AG04449 (cell line): ENCODE measurements at regions of chr1 and their contacts with region 1.

Region 1: GRCh38 chr1:39919545-39919944 is 17.8 kb upstream of the MYCL start:
- DNase-seq: no peak
- H3K4me3 ChIP-seq: no peak overlapping the region
- CTCF ChIP-seq: peak; percentile 48

Region 2: GRCh38 chr1:39672551-39672947 is 247.0 kb before region 1 on chr1:
- CTCF ChIA-PET with region 1: no interaction called
- POLR2A ChIA-PET with region 1: no interaction called
- DNase-seq: no peak
- H3K4me3 ChIP-seq: peak overlapping the region; percentile 47
- CTCF ChIP-seq: peak; percentile 50

Region 3: DNA sequence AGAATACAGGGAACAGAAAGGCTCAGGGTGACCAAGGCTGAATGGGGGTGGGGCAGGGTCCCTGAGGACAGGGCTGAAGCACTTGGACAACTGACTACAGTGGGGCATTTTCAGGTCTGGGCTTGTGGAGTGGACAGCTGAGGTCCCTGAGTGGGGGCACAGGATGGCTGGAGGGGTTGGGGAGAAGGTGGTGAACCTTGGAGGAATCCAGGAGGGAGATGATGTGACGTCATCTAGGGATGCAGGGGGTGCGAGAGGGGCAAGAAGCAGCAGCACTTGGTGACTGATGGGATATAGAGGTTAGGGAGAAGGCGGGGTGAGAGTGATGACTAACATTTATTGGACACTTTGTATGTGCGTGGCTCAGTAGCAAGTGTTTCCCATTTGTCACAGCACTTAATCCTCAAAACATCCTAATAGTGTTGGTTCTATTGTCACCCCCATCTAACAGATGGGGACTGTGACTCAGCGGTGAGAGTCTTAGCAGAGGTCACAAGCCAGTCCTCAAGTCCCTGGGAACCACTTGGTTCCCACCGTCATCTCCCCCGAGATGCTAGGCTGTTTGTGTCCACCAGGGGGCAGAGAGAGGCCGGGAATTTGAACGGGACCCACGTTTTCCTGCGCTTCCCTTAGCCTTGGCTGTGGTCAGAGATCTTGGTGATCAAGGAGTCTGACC is 103.0 kb before region 1 on chr1:
- CTCF ChIA-PET with region 1: interaction called, 61 read pairs
- POLR2A ChIA-PET with region 1: no interaction called
- DNase-seq: peak; percentile 49
- H3K4me3 ChIP-seq: no peak overlapping the region
- CTCF ChIP-seq: peak; percentile 81

Region 4: DNA sequence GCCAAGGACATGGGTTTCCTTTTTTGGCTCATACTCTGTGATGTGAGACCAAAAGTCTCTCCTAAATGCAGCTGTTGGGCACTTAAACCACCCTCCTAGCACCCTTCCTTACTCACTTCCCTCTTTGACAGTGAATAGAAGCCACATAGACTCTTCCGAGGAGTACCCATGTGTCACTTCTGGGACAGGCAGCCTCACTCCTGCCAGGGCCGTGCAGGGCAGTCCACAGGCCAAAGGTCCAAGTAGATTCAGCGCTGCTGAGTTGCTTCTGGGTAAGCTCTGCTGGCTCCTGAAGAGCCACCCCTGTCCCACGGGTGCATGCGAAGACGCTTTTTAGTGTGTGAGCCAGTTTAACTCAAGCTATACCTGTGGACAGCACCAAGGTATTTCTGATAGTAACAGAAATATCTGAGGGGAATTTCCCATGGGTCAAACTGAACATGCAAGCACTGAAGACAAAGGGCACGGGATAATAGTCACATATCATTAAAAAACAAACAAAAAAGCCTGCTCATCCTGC is 94.1 kb before region 1 on chr1:
- CTCF ChIA-PET with region 1: interaction called, 61 read pairs
- POLR2A ChIA-PET with region 1: no interaction called
- DNase-seq: no peak
- H3K4me3 ChIP-seq: no peak overlapping the region
- CTCF ChIP-seq: no peak

Region 5: GRCh38 chr1:39901698-39902459 is 17.7 kb before region 1 on chr1 and contains the start of gene MYCL:
- CTCF ChIA-PET with region 1: interaction called, 168 read pairs
- POLR2A ChIA-PET with region 1: no interaction called
- DNase-seq: no peak
- H3K4me3 ChIP-seq: peak within 1 kb of the TSS; percentile 63
- CTCF ChIP-seq: peak; percentile 70

Region 6: DNA sequence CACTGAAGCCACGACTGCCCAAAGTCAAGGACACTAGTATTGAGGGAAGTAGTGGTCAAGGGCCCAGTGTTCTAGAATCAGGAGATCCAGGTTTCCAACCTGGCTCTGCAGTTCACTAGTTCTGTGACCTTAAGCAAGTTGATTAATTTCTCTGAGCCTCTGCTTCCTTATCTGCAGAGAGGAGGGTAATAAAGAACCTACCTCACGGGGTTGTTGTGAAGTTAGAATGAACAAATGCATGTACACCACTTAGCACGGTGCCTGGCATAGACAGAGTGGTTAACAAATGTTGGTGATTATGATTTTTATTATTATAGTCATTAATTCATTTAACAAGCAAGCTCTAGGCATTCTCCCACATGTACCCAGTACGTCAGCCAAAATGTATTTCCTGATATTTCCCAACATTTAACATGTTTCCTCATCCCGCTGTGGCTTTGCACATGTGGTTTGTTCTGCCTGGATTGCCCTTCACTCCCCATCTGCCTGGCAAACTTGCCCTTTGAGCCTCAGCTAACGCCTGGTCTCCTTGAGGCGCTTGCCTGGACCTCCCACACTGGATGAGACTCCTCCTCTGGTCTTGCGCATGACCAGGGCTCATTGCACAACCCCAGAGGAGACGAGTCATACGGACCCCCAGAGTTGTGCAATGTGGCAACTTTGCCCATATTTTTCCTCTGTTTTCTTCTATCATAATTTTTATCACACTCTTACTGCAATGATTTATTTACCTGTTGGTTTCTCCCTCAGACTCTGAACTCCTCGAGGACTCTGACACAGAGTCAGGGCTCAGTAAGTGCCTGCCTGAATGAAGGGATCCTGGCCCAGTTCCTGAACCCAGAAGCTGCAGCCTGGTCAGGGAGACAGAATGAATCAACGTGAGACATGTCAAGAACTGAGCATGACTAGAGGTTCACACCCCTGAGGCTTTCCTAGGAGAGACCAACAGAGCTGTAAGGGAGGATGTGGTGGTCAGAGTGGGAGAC is 14.7 kb after region 1 on chr1:
- CTCF ChIA-PET with region 1: interaction called, 19 read pairs
- POLR2A ChIA-PET with region 1: no interaction called
- DNase-seq: peak; percentile 88
- H3K4me3 ChIP-seq: no peak overlapping the region; the same call in 1 of the 2 replicates
- CTCF ChIP-seq: no peak

Region 7: GRCh38 chr1:39954816-39955546 is 35.4 kb after region 1 on chr1 and contains the start of gene MFSD2A:
- CTCF ChIA-PET with region 1: interaction called, 39 read pairs
- POLR2A ChIA-PET with region 1: interaction called, 4 read pairs
- DNase-seq: peak; percentile 42
- H3K4me3 ChIP-seq: peak within 1 kb of the TSS; percentile 66
- CTCF ChIP-seq: no peak

Region 8: GRCh38 chr1:40014812-40015594 is 95.5 kb after region 1 on chr1:
- CTCF ChIA-PET with region 1: interaction called, 10 read pairs
- POLR2A ChIA-PET with region 1: no interaction called
- DNase-seq: peak; percentile 70
- H3K4me3 ChIP-seq: no peak overlapping the region
- CTCF ChIP-seq: no peak